Panc1 (cell line): ENCODE measurements at regions of chr2 and their contacts with region 1.

Region 1: GRCh38 chr2:169572821-169573159 is 875 bp downstream of the FASTKD1 start:
- DNase-seq: no peak
- ATAC-seq: no peak
- H3K4me3 ChIP-seq: peak overlapping the region; percentile 87 to 91
- H3K27ac ChIP-seq: peak overlapping the region; percentile 93
- H3K4me1 ChIP-seq: peaks cover 13% of the 10 kb centered on the region; the same call in 1 of the 2 replicates
- H3K27me3 ChIP-seq: no peaks in the 10 kb centered on the region
- CTCF ChIP-seq: no peak

Region 2: DNA sequence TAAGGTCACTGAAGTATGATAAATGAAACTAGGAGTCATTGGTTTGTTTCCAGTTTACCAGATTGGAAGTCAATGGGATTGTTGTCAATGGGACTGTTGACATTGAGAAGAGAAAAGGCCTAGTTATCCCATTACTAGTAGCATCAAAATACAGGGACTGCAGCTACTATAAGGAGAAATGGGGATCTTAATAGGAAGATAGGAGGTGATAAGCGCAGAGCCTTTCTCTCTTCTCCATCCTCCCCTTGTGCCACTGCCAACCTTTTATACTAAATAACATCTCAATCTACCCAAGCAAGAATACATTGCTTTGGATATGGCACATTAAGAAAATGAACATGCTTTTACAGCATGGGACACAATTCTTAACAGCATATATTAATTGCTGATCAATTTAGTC is 103.9 kb before region 1 on chr2:
- CTCF ChIA-PET with region 1: no interaction called
- POLR2A ChIA-PET with region 1: no interaction called
- in situ Hi-C with region 1: no loop called
- intact Hi-C with region 1: no loop called
- DNase-seq: no peak
- ATAC-seq: no peak
- H3K4me3 ChIP-seq: no peak overlapping the region
- H3K27ac ChIP-seq: no peak overlapping the region
- H3K4me1 ChIP-seq: no peaks in the 10 kb centered on the region
- H3K27me3 ChIP-seq: no peaks in the 10 kb centered on the region
- CTCF ChIP-seq: no peak

Region 3: DNA sequence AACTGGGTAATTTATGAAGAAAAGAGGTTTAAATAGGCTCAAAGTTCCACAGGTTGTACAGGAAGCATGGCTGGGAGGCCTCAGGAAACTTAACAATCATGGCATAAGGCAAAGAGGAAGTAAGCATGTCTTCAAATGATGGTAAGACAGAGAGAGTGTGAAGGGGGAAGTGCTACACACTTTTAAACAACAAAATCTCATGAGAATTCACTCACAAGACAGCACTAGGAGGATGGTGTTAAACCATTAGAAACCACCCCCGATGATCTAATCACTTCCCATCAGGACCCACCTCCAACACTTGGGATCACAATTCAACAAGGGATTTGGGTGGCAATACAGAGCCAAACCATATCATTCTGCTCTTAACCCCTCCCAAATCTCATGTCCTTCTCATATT is 86.5 kb after region 1 on chr2:
- CTCF ChIA-PET with region 1: no interaction called
- POLR2A ChIA-PET with region 1: interaction called, 13 read pairs
- in situ Hi-C with region 1: no loop called
- intact Hi-C with region 1: no loop called
- DNase-seq: no peak
- ATAC-seq: no peak
- H3K4me3 ChIP-seq: no peak overlapping the region
- H3K27ac ChIP-seq: no peak overlapping the region
- H3K4me1 ChIP-seq: no peaks in the 10 kb centered on the region; the same call in 1 of the 2 replicates
- H3K27me3 ChIP-seq: no peaks in the 10 kb centered on the region
- CTCF ChIP-seq: no peak